ENCODE measurements at regions of chr2 and their contacts with region 1.

Region 1: DNA sequence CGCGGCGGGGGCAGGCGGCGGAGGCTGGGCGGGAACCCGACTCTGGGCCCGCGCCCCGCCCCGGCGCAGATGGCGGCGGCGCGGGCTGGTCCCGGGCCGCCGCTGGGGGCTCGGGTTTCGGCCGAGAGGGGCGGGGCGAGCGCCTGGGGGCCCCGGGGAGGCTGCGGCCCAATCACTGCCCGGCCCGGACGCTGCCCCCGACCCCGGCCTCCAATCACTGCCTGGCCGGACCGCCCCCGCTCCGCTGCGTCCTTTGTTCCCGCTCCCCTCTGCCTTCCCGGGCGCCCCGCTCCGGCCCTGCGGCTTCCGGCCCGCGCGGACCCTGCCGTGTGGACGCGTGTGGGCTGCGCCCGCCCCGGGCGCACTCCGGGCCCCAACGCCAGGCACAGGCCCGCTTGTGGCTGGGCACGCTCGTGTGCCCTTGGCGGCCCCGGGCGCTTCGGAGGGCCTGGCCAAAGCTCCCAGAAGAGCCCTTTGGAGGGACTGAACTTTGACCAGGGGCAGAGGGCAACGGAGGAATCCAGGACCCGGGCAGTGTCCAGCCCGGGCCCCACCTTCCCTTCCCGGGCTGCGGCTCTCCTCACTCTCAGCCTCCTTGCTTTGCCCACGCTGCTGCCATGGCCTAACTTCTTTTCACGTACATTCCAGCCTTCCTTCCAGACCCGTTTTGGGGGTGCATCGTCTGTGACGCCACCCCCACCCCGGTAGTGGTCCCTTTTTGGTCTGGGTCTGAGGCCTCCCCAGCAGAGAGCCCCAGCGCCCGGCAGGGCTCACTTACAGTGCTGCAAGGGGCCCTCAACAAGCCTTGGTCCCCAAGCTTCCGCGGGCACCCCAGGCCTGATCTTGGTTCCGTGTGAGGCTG is 27.1 kb upstream of the PTMA start:
- DNase-seq: peak; percentile 90 to 91
- ATAC-seq: peak; percentile 84 to 94 (median 88)
- H3K4me3 ChIP-seq: peak overlapping the region; percentile 38 to 65 (median 54)
- H3K27ac ChIP-seq: peak overlapping the region; percentile 82 to 98 (median 93)
- H3K4me1 ChIP-seq: peaks cover 0 to 37% (median 17%) of the 10 kb centered on the region in 9 donors
- H3K27me3 ChIP-seq: no peaks in the 10 kb centered on the region
- CTCF ChIP-seq: no peak

Region 2: GRCh38 chr2:231621129-231621879 is 59.9 kb before region 1 on chr2:
- intact Hi-C with region 1: no loop called
- DNase-seq: peak; percentile 48 to 80
- ATAC-seq: peak; percentile 53 to 87 (median 80)
- H3K4me3 ChIP-seq: peak overlapping the region in 8 of 10 donors; percentile 15 to 49 (median 26)
- H3K27ac ChIP-seq: peak overlapping the region; percentile 7 to 82 (median 74)
- H3K4me1 ChIP-seq: peaks cover 0 to 21% (median 11%) of the 10 kb centered on the region in 9 donors
- H3K27me3 ChIP-seq: no peaks in the 10 kb centered on the region
- CTCF ChIP-seq: no peak

Region 3: DNA sequence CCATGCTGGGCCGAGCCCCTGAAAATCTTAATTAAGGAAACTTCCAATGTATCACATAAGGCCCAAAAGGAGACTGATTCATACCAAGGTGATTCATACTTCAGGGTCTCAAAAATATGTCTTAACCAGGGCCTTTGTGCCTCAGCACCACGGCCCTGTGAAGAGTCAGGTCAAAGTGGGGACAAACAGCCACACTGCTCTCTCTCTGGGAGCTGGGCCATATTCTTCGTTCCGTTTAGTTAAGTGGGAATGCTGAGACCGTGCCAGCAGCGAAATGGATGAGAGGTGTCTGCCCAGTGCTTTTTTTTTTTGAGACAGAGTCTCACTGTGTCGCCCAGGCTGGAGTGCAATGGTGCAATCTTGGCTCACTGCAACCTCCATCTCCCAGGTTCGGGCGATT is 17.8 kb after region 1 on chr2:
- intact Hi-C with region 1: loop called in 1 of 10 experiments (anchors 2 kb)
- DNase-seq: peak; percentile 54 to 58
- ATAC-seq: peak; percentile 60 to 91 (median 78)
- H3K4me3 ChIP-seq: no peak overlapping the region
- H3K27ac ChIP-seq: peak overlapping the region in 4 of 10 donors; percentile 3 to 39 (median 12)
- H3K4me1 ChIP-seq: peaks cover 0 to 15% (median 6%) of the 10 kb centered on the region in 9 donors
- H3K27me3 ChIP-seq: no peaks in the 10 kb centered on the region
- CTCF ChIP-seq: no peak

Region 4: GRCh38 chr2:231900486-231900942 is 219.3 kb after region 1 on chr2:
- intact Hi-C with region 1: no loop called
- DNase-seq: peak; percentile 65 to 79
- ATAC-seq: peak; percentile 49 to 84 (median 69)
- H3K4me3 ChIP-seq: no peak overlapping the region
- H3K27ac ChIP-seq: no peak overlapping the region
- H3K4me1 ChIP-seq: peaks cover 0 to 3% (median 0%) of the 10 kb centered on the region in 9 donors
- H3K27me3 ChIP-seq: peaks cover 0 to 24% (median 4%) of the 10 kb centered on the region in 7 donors
- CTCF ChIP-seq: peak; percentile 36 to 88 (median 74)